ENCODE measurements at regions of chr7 and their contacts with region 1.

Region 1: DNA sequence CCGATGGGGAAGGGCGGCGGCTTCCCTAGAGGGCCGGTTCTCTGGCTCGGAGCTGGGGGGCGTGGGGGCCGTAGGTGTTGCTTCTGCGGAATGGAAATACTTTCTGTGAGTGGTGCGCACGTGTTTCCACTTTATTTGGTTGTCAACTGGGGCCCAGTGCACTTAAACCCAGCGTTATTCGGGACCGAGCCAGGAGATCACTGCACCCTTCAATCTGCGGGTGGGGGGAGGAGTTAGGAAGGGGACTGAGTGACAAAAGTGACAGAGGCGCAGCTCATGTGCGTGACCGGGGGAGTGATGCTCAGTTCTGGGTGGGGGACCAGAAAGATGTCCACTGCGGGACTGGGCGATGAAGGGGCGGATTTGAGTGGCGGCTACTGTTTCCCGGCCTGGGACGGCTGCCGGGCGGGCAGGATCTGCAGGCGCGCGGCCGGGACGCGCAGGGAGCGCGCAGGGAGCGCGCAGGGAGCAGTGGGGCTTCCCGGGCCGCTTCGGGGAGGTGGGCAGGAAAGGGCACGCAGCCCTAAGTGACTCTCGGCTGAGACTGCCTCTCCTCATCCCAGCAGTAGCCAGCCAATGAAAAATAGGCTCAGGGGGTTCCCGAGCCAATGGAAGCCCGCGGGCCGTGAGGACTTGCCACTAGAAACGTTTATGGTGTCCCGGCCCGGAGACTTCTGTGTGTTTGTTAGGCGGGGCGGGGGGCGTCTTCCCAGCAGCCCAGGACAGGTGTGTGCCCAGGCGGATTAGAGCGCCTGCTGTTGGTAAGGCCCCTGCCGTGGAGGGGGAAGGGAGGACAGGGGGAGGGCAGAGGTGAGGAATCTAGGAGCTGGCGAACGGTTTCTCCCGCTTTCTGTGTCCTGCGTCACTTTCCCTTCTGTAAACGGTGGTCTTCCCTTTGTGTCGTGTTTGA is 54.3 kb upstream of the KDM7A start:
- DNase-seq: peak; percentile 59
- ATAC-seq: peak; percentile 46
- H3K4me3 Mint-ChIP-seq: peak overlapping the region; percentile 91
- H3K27ac Mint-ChIP-seq: peak overlapping the region; percentile 91
- H3K4me1 Mint-ChIP-seq: peaks cover 30% of the 10 kb centered on the region
- H3K27me3 Mint-ChIP-seq: no peaks in the 10 kb centered on the region

Region 2: GRCh38 chr7:140175221-140176121 is 55.6 kb before region 1 on chr7:
- POLR2A ChIA-PET with region 1: interaction called, 34 read pairs
- DNase-seq: peak; percentile 78
- ATAC-seq: peak; percentile 48
- H3K4me3 Mint-ChIP-seq: peak overlapping the region; percentile 81
- H3K27ac Mint-ChIP-seq: peak overlapping the region; percentile 87
- H3K4me1 Mint-ChIP-seq: peaks cover 16% of the 10 kb centered on the region
- H3K27me3 Mint-ChIP-seq: peaks cover 17% of the 10 kb centered on the region

Region 3: GRCh38 chr7:140214075-140214684 is 16.9 kb before region 1 on chr7:
- POLR2A ChIA-PET with region 1: no interaction called
- DNase-seq: no peak
- ATAC-seq: no peak
- H3K4me3 Mint-ChIP-seq: no peak overlapping the region
- H3K27ac Mint-ChIP-seq: no peak overlapping the region
- H3K4me1 Mint-ChIP-seq: peaks cover 33% of the 10 kb centered on the region
- H3K27me3 Mint-ChIP-seq: peaks cover 2% of the 10 kb centered on the region

Region 4: DNA sequence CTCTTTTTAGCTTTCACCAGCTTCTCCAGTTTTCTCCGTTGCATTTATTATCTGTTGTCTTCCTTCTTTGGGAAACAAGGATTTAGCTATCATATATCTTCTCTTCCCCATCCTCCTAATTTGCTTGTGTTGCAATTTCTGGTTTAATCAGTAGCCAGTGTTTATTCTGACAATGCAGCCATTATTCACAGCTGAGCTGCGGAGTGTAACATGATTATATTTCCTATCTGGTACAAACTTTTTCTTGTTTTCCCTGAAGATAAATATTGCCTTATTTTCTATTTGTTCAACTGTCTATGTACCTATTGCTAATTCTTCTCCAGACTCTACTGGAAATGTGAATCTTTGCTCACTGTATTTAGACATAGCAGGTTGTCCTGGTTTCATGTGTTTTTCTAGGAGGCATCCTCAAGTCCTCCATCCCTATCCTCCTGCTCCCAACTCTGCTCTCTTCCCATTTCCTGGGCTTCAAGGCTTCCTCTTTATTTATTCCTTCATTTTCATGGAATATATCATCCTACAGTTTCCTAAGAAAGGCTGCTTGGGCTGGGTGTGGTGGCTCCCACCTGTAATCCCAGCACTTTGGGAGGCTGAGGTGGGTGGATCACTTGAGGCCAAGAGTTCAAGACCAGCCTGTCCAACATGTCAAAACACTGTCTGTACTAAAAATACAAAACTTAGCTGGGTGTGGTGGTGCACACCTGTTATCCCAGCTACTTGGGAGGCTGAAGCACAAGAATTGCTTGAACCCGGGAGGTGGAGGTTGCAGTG is 18.1 kb after region 1 on chr7:
- POLR2A ChIA-PET with region 1: interaction called, 14 read pairs
- DNase-seq: no peak
- ATAC-seq: no peak
- H3K4me3 Mint-ChIP-seq: no peak overlapping the region
- H3K27ac Mint-ChIP-seq: no peak overlapping the region
- H3K4me1 Mint-ChIP-seq: peaks cover 18% of the 10 kb centered on the region
- H3K27me3 Mint-ChIP-seq: peaks cover 4% of the 10 kb centered on the region

Region 5: DNA sequence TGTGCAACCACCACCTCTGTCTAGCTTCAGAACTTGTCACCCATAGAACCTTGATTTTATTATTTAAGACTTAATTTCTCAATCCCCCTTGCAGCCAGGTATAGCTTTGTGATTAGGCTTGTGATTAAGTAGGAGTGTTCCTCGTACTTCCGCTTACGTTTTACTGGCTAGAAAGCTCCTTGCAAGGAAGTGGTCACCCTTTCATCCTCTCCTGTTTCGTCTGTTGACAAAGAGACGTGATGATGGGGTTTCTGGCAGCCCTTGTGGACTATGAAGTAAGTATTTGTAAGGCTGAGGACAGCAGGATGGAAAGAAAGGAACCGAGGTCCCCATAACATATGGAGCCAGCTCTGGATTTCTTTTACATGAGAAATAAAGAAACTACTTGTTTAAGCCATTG is 32.2 kb after region 1 on chr7:
- POLR2A ChIA-PET with region 1: interaction called, 23 read pairs
- DNase-seq: no peak
- ATAC-seq: peak; percentile 96
- H3K4me3 Mint-ChIP-seq: peak overlapping the region; percentile 50
- H3K27ac Mint-ChIP-seq: peak overlapping the region; percentile 94
- H3K4me1 Mint-ChIP-seq: peaks cover 41% of the 10 kb centered on the region
- H3K27me3 Mint-ChIP-seq: no peaks in the 10 kb centered on the region

Region 6: GRCh38 chr7:140475747-140476348 is 244.7 kb after region 1 on chr7:
- POLR2A ChIA-PET with region 1: no interaction called
- DNase-seq: no peak
- ATAC-seq: no peak
- H3K4me3 Mint-ChIP-seq: peak overlapping the region; percentile 45
- H3K27ac Mint-ChIP-seq: peak overlapping the region; percentile 51
- H3K4me1 Mint-ChIP-seq: peaks cover 17% of the 10 kb centered on the region
- H3K27me3 Mint-ChIP-seq: no peaks in the 10 kb centered on the region